PC-3 (cell line): ENCODE measurements at regions of chr11 and their contacts with region 1.

Region 1: DNA sequence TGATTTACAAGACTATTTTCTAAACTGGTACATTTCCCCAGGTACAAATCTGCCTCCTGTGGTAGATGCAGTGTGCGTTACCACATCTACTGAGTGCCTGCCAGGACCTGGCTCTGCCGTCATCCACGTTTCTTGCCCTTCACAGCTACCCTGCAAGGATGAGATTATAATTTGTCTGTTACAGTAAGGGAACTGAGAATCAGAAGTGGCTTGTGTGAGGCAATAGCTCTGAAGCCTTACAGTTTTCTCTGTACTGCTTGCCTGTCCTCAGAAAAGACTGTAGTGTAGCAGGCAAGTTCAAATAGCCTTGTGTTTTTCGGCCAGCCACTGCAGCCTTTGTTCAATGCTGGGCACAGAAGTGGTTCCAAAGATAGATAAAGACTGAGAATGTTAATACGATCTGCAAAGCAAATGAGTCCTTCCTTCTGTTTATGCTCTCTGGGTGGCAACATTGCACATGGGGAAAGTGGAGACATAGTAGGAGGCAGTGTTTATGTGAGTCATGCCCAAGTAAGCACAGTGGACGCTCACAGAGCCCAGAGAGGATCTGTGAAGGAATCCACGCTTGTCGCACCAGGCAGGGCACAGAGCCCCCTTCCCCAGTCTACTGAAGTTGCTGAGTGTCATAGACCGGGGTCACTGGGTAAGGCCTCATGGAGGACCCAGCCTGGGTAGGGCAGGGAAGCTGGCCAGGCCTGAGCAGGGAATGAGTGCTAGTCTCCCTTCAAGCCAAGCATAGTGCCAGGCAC is 49.1 kb downstream of the MICAL2 start:
- DNase-seq: peak; percentile 69
- ATAC-seq: peak; percentile 69
- H3K4me3 ChIP-seq: no peak overlapping the region
- H3K27ac ChIP-seq: peak overlapping the region; percentile 48
- H3K4me1 ChIP-seq: peaks cover 43% of the 10 kb centered on the region
- H3K27me3 ChIP-seq: no peaks in the 10 kb centered on the region
- CTCF ChIP-seq: peak; percentile 32; the same call in 1 of the 2 replicates

Region 2: GRCh38 chr11:12229450-12230229 is 70.1 kb after region 1 on chr11:
- CTCF ChIA-PET with region 1: no interaction called
- POLR2A ChIA-PET with region 1: interaction called, 4 read pairs
- intact Hi-C with region 1: loop called (anchors 1 kb)
- DNase-seq: peak; percentile 82
- ATAC-seq: peak; percentile 79
- H3K4me3 ChIP-seq: no peak overlapping the region
- H3K27ac ChIP-seq: peak overlapping the region; percentile 97
- H3K4me1 ChIP-seq: peaks cover 59% of the 10 kb centered on the region
- H3K27me3 ChIP-seq: no peaks in the 10 kb centered on the region
- CTCF ChIP-seq: no peak

Region 3: GRCh38 chr11:12787847-12788246 is 628.3 kb after region 1 on chr11:
- CTCF ChIA-PET with region 1: no interaction called
- POLR2A ChIA-PET with region 1: no interaction called
- intact Hi-C with region 1: no loop called
- DNase-seq: peak; percentile 62
- ATAC-seq: peak; percentile 47
- H3K4me3 ChIP-seq: no peak overlapping the region
- H3K27ac ChIP-seq: no peak overlapping the region
- H3K4me1 ChIP-seq: peaks cover 29% of the 10 kb centered on the region
- H3K27me3 ChIP-seq: no peaks in the 10 kb centered on the region
- CTCF ChIP-seq: no peak